Calu3 (cell line): ENCODE measurements at regions of chr1 and their contacts with region 1.

Region 1: GRCh38 chr1:169794530-169795416 is at the start of gene METTL18:
- DNase-seq: peak; percentile 94
- H3K4me3 Mint-ChIP-seq: peak within 1 kb of the TSS; percentile 93
- H3K27ac Mint-ChIP-seq: peak within 1 kb of the TSS; percentile 93
- H3K4me1 Mint-ChIP-seq: peaks cover 31% of the 10 kb centered on the region
- H3K27me3 Mint-ChIP-seq: no peaks in the 10 kb centered on the region
- CTCF ChIP-seq: no peak
- total RNA-seq, gene METTL18: 11.2 and 13.3 TPM in 2 replicates

Region 2: GRCh38 chr1:169779980-169780379 is 14.8 kb before region 1 on chr1:
- CTCF ChIA-PET with region 1: interaction called, 3 read pairs
- intact Hi-C with region 1: loop called (anchors 2 kb)
- DNase-seq: peak; percentile 18
- H3K4me3 Mint-ChIP-seq: no peak overlapping the region
- H3K27ac Mint-ChIP-seq: peak overlapping the region; percentile 28
- H3K4me1 Mint-ChIP-seq: peaks cover 55% of the 10 kb centered on the region
- H3K27me3 Mint-ChIP-seq: no peaks in the 10 kb centered on the region
- CTCF ChIP-seq: no peak

Region 3: GRCh38 chr1:170520601-170521000 is 725.8 kb after region 1 on chr1:
- CTCF ChIA-PET with region 1: no interaction called
- intact Hi-C with region 1: no loop called
- DNase-seq: no peak
- H3K4me3 Mint-ChIP-seq: no peak overlapping the region
- H3K27ac Mint-ChIP-seq: no peak overlapping the region
- H3K4me1 Mint-ChIP-seq: no peaks in the 10 kb centered on the region
- H3K27me3 Mint-ChIP-seq: no peaks in the 10 kb centered on the region
- CTCF ChIP-seq: no peak